Tibial artery (tissue), 4 donors: ENCODE measurements at regions of chr12 and their contacts with region 1.

Region 1: DNA sequence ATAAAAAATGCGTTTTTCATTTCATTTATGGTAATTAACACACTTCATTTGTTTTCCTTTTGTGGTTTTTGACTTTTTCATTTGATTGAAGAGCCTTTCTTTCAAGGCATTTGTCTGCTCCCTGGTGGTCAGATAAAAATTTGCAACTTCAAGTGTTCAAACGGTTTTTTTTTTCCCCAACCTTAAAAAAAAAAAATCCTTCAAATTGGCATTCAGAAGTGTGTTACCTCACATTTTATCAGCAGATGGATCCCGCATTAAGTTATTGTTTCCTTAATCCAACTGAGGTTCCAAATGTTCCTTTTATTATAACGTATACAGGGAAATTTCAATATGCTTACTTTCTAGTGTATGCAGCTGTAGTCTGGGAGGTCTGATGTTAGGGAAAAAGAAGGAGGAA is 47.2 kb downstream of the MYF5 start:
- DNase-seq: no peak
- H3K4me3 ChIP-seq: no peak overlapping the region
- H3K27ac ChIP-seq: no peak overlapping the region
- H3K4me1 ChIP-seq: no peaks in the 10 kb centered on the region
- H3K27me3 ChIP-seq: no peaks in the 10 kb centered on the region
- CTCF ChIP-seq: peak; percentile 60 to 66

Region 2: DNA sequence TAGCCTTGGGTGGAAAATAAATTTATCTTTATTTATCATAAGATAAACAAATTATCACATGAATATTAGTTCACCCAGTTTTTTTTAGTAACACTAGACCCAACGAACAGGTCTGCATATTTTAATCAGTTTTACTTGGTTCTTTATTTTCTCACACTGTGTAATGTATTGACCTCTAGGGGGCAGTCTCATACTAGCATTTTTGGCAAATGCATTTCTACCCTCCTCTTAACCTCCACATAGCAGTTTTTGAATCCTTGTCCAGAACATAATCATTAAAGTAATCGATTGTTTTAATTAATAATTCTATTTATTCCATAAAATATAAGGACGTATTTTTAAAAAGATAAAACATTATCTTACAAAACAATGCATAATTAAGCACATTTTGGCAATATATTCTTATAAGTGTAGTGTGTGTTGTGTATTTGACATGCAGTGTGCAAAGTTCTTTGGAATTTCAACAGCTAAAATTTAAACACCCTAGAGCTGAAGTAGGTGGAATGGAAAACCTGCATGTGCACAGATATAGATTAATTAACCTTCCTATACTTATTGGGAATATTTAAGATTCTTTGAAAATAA is 351.4 kb before region 1 on chr12:
- intact Hi-C with region 1: loop called (anchors 5 kb)
- DNase-seq: no peak
- H3K4me3 ChIP-seq: no peak overlapping the region
- H3K27ac ChIP-seq: no peak overlapping the region
- H3K4me1 ChIP-seq: peaks cover 0 to 3% (median 0%) of the 10 kb centered on the region in 4 donors
- H3K27me3 ChIP-seq: no peaks in the 10 kb centered on the region
- CTCF ChIP-seq: peak; percentile 72 to 78

Region 3: DNA sequence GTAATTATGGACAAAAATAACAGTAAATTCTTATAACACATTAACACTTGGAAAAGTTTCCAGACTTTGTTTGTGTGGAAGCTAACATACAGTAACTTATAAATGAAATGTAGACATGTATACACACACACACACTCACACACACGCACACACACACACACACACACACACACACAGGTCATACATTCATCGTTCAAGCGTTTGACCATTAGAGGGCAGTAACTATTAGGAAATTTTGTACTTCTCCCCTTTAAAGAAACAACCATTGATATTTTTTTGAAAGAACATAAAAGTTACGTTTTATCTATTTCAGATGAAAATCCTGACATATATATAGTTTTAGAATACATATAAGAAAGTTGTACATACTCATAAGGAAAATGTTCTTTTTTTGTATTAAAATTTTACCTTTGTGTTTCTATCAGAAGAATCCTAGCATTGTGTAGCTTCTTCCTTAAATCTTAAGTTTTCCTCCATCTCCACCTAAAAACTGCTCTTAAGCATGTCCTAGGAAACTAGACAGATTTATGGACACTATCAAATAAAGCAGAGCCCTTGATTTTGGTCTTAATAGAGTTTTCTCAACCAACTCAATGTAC is 290.9 kb before region 1 on chr12:
- intact Hi-C with region 1: loop called (anchors 10 kb)
- DNase-seq: no peak
- H3K4me3 ChIP-seq: no peak overlapping the region
- H3K27ac ChIP-seq: no peak overlapping the region
- H3K4me1 ChIP-seq: no peaks in the 10 kb centered on the region
- H3K27me3 ChIP-seq: no peaks in the 10 kb centered on the region
- CTCF ChIP-seq: peak; percentile 34 to 62